ENCODE measurements at regions of chr2 and their contacts with region 1.

Region 1: DNA sequence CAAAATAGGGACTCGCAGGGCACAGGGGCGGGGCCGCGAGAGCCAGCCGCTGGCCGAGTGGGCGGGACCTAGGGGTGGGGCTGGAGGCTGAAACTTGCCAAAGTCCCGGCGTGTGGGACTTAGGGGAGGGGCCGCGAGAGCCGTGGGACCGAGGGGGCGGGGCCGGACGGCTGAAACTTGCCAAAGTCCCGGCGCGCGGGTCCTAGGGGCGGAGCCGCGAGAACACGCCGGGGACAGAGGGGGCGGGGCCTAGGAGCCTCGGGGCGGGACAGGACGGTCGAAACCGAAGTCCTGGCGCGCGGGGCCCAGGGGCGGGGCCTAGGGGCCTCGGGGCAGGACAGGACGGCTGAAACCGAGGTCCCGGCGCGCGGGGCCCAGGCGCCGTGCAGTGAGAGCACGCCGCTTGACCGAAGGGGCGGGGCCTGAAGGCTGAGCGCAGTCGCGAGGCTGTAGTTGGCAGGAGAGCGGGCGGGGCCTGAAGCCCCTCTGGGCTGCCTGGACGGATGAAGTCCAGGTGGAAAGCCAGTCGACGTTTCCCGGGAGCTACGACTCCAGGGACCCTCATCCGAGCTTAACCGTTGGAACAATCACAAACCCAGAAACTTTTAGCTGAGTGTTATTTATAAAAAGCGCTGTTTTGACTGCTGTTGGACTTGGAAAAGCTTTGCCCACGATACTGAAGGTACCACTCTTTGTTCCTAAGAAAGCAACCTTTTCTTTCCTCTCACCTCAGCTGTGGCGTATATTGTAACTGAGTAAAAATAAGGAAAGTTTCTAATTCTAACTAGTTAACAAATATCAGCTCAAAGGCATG is 475 bp upstream of the BARD1 start:
- DNase-seq: peak; percentile 100
- H3K4me3 Mint-ChIP-seq: peak overlapping the region; percentile 68
- H3K27ac Mint-ChIP-seq: peak overlapping the region; percentile 56
- H3K4me1 Mint-ChIP-seq: peaks cover 27% of the 10 kb centered on the region
- H3K27me3 Mint-ChIP-seq: no peaks in the 10 kb centered on the region
- CTCF ChIP-seq: no peak

Region 2: GRCh38 chr2:214395040-214395439 is 414.9 kb before region 1 on chr2:
- CTCF ChIA-PET with region 1: no interaction called
- intact Hi-C with region 1: no loop called
- DNase-seq: no peak
- H3K4me3 Mint-ChIP-seq: no peak overlapping the region
- H3K27ac Mint-ChIP-seq: no peak overlapping the region
- H3K4me1 Mint-ChIP-seq: no peaks in the 10 kb centered on the region
- H3K27me3 Mint-ChIP-seq: no peaks in the 10 kb centered on the region
- CTCF ChIP-seq: no peak

Region 3: GRCh38 chr2:215136669-215137328 is 326.8 kb after region 1 on chr2:
- CTCF ChIA-PET with region 1: no interaction called
- intact Hi-C with region 1: loop called (anchors 5 kb)
- DNase-seq: no peak
- H3K4me3 Mint-ChIP-seq: peak overlapping the region; percentile 73
- H3K27ac Mint-ChIP-seq: peak overlapping the region; percentile 94
- H3K4me1 Mint-ChIP-seq: peaks cover 42% of the 10 kb centered on the region
- H3K27me3 Mint-ChIP-seq: no peaks in the 10 kb centered on the region
- CTCF ChIP-seq: no peak

Measured in Calu3 (cell line).